ENCODE measurements at regions of chr17 and their contacts with region 1.

Region 1: GRCh38 chr17:34637548-34638525 is 58.5 kb downstream of the TMEM132E start:
- DNase-seq: peak; percentile 51 to 89
- H3K4me3 ChIP-seq: peak overlapping the region in 1 of 4 experiments; percentile 36; a peak in 2 of 8 replicates
- H3K27ac ChIP-seq: no peak overlapping the region
- H3K4me1 ChIP-seq: peaks cover 0 to 16% (median 2%) of the 10 kb centered on the region in 4 experiments; a peak in 5 of 7 replicates
- H3K27me3 ChIP-seq: peaks cover 2 to 27% (median 18%) of the 10 kb centered on the region in 4 experiments; a peak in 6 of 7 replicates
- CTCF ChIP-seq: peak; percentile 87 to 98 (median 92)
- EP300 ChIP-seq: no peak
- POLR2A ChIP-seq: no peak
- RAD21 ChIP-seq: peak; percentile 87 to 91

Region 2: DNA sequence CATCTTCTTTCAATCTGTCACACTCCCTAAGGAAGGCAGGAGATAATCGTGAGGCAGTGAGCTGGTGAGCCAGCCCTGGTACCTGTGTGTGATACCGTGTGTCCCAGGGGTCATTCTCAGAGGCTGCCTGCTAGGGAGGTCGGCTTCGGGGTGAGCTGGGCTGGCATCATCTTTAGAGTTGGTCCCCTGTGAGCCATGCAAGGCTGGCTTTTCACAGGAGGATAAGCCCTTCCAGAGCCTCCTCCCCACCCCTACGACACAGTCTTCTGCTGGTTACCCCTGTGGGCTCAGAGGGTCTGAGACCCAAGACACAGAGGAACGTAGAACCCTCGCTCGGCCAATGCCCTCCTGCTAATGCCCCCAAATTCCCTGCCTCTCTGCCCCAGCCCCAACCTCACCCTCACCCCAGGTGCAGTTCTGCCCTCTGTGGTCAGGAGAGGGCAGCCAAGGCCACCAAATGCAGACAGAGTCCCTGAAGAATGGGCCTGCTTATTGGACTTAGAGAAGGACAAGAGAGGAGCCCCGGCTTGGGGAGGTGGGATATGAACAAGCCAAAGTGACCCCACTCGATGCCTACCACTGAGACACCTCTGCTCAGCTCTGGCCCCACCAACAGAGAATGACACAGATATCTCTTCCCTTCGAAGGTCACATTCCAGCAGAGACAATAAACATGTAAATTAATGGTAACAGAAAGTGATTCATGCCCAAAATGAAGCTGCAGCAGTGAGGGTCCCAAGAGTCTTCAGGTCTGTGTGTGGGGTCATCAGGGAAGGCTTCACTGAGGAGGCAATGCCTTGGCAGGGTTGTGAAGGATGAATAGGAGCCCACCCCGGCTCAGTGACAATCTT is 194.0 kb before region 1 on chr17:
- CTCF ChIA-PET with region 1: interaction called, 10 read pairs
- POLR2A ChIA-PET with region 1: no interaction called
- DNase-seq: peak in 1 of 2 experiments; percentile 62
- H3K4me3 ChIP-seq: no peak overlapping the region
- H3K27ac ChIP-seq: no peak overlapping the region
- H3K4me1 ChIP-seq: peaks cover 0 to 4% (median under 1%) of the 10 kb centered on the region in 4 experiments; a peak in 1 of 7 replicates
- H3K27me3 ChIP-seq: no peaks in the 10 kb centered on the region
- CTCF ChIP-seq: peak; percentile 80 to 83 (median 81)
- EP300 ChIP-seq: no peak
- POLR2A ChIP-seq: no peak
- RAD21 ChIP-seq: peak; percentile 89 to 93

Region 3: DNA sequence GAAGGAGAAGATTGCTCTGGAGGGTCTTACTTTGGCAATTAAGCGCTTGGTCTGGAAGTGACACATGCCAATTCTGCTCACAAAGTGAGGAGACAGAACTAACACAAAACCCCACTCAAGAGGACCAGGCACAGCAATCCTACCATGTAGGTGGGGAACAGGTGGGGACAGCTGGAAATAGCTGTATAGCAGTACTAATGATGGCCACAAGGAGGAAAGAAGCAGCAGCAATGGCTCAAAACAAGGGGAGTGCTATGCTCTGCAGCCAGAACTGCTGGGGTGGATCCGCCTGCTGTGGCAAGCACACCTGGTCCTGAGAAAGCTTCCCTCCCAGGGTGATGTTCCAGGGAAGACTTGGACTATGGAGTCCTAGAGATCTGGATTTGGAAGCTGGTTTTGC is 75.5 kb before region 1 on chr17:
- CTCF ChIA-PET with region 1: interaction called, 13 read pairs
- POLR2A ChIA-PET with region 1: no interaction called
- DNase-seq: no peak
- H3K4me3 ChIP-seq: no peak overlapping the region
- H3K27ac ChIP-seq: no peak overlapping the region
- H3K4me1 ChIP-seq: no peaks in the 10 kb centered on the region; a peak in 1 of 7 replicates
- H3K27me3 ChIP-seq: peaks cover 0 to 10% (median 0%) of the 10 kb centered on the region in 4 experiments; a peak in 2 of 7 replicates
- CTCF ChIP-seq: peak; percentile 39 to 82 (median 66)
- EP300 ChIP-seq: no peak
- POLR2A ChIP-seq: no peak
- RAD21 ChIP-seq: peak; percentile 71 to 73

Region 4: GRCh38 chr17:34584805-34585416 is 52.9 kb before region 1 on chr17:
- CTCF ChIA-PET with region 1: interaction called, 14 read pairs
- POLR2A ChIA-PET with region 1: interaction called, 4 read pairs
- DNase-seq: no peak
- H3K4me3 ChIP-seq: no peak overlapping the region
- H3K27ac ChIP-seq: no peak overlapping the region
- H3K4me1 ChIP-seq: peaks cover 0 to 22% (median 11%) of the 10 kb centered on the region in 4 experiments; a peak in 5 of 7 replicates
- H3K27me3 ChIP-seq: peaks cover 66 to 96% (median 90%) of the 10 kb centered on the region in 4 experiments
- CTCF ChIP-seq: peak in 2 of 3 experiments; percentile 27 to 49; a peak in 3 of 4 replicates
- EP300 ChIP-seq: no peak
- POLR2A ChIP-seq: no peak
- RAD21 ChIP-seq: peak; percentile 52 to 65

Region 5: DNA sequence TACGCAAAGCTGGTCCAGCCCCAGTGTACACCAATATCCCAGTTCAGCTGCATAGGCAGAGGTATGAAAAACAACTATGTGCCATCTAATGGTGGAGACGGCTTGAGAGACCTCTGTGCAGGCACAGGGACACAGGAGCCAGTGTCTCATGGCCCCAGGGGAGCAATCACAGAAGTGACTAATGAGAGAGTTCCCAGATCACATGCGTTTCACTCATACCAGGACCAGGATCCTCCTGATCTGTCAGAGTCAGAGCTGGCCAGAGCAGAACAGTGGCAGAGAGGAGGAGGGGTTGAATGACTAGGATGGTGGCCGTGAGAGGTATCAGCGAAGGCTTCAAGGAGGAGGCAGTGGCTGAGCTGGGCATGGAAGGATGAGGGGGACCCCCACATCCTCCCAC is 17.4 kb before region 1 on chr17:
- CTCF ChIA-PET with region 1: interaction called, 26 read pairs
- POLR2A ChIA-PET with region 1: interaction called, 3 read pairs
- DNase-seq: no peak
- H3K4me3 ChIP-seq: no peak overlapping the region
- H3K27ac ChIP-seq: no peak overlapping the region
- H3K4me1 ChIP-seq: peaks cover 11 to 31% (median 23%) of the 10 kb centered on the region in 4 experiments
- H3K27me3 ChIP-seq: peaks cover 0 to 7% (median 1%) of the 10 kb centered on the region in 4 experiments; a peak in 6 of 7 replicates
- CTCF ChIP-seq: no peak
- EP300 ChIP-seq: no peak
- POLR2A ChIP-seq: no peak
- RAD21 ChIP-seq: no peak

Region 6: DNA sequence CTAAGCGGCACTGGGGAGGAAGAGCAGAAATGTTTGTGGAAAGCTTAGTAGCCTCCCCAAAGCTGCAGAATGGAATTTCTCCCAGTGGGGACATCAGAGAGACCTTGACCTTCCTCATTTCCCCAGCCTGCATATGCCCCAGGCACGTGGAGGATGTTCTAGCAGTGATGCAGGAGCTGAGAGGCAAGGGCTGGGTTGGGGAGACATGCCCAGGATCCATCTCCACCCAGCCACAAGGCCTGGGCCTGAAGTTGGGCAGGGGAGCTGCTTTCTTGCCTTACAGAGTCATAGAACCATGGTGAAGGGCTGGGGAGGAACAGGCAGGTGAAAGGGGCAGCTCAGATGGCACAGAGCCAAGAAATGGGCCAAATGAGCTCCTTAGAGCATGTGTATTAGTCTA is 45.6 kb after region 1 on chr17:
- CTCF ChIA-PET with region 1: no interaction called
- POLR2A ChIA-PET with region 1: no interaction called
- DNase-seq: no peak
- H3K4me3 ChIP-seq: no peak overlapping the region
- H3K27ac ChIP-seq: no peak overlapping the region
- H3K4me1 ChIP-seq: no peaks in the 10 kb centered on the region
- H3K27me3 ChIP-seq: no peaks in the 10 kb centered on the region; a peak in 1 of 7 replicates
- CTCF ChIP-seq: no peak
- EP300 ChIP-seq: no peak
- POLR2A ChIP-seq: no peak
- RAD21 ChIP-seq: no peak

Region 7: GRCh38 chr17:34699181-34699580 is 61.3 kb after region 1 on chr17:
- CTCF ChIA-PET with region 1: no interaction called
- POLR2A ChIA-PET with region 1: no interaction called
- DNase-seq: no peak
- H3K4me3 ChIP-seq: no peak overlapping the region
- H3K27ac ChIP-seq: no peak overlapping the region
- H3K4me1 ChIP-seq: no peaks in the 10 kb centered on the region
- H3K27me3 ChIP-seq: no peaks in the 10 kb centered on the region
- CTCF ChIP-seq: no peak
- EP300 ChIP-seq: no peak
- POLR2A ChIP-seq: no peak
- RAD21 ChIP-seq: no peak

Region 8: GRCh38 chr17:34892461-34893249 is 254.8 kb after region 1 on chr17:
- CTCF ChIA-PET with region 1: interaction called, 31 read pairs
- POLR2A ChIA-PET with region 1: no interaction called
- DNase-seq: peak; percentile 21 to 77
- H3K4me3 ChIP-seq: no peak overlapping the region
- H3K27ac ChIP-seq: no peak overlapping the region
- H3K4me1 ChIP-seq: no peaks in the 10 kb centered on the region
- H3K27me3 ChIP-seq: no peaks in the 10 kb centered on the region; a peak in 1 of 7 replicates
- CTCF ChIP-seq: peak; percentile 90 to 95 (median 94)
- EP300 ChIP-seq: no peak
- POLR2A ChIP-seq: no peak
- RAD21 ChIP-seq: peak; percentile 98